ENCODE measurements at regions of chr20 and their contacts with region 1.

Region 1: GRCh38 chr20:8946036-8946940 is 122.6 kb upstream of the PLCB4 start:
- DNase-seq: no peak
- ATAC-seq: no peak
- H3K4me3 ChIP-seq: no peak overlapping the region
- H3K27ac ChIP-seq: no peak overlapping the region
- H3K4me1 ChIP-seq: no peaks in the 10 kb centered on the region
- H3K27me3 ChIP-seq: no peaks in the 10 kb centered on the region
- CTCF ChIP-seq: no peak
- EP300 ChIP-seq: no peak
- POLR2A ChIP-seq: no peak
- RAD21 ChIP-seq: no peak

Region 2: GRCh38 chr20:8853805-8854338 is 92.4 kb before region 1 on chr20:
- CTCF ChIA-PET with region 1: no interaction called
- POLR2A ChIA-PET with region 1: no interaction called
- in situ Hi-C with region 1: no loop called
- intact Hi-C with region 1: loop called (anchors 10 kb)
- DNase-seq: peak; percentile 39 to 61 (median 40)
- ATAC-seq: peak; percentile 88
- H3K4me3 ChIP-seq: no peak overlapping the region
- H3K27ac ChIP-seq: no peak overlapping the region
- H3K4me1 ChIP-seq: no peaks in the 10 kb centered on the region
- H3K27me3 ChIP-seq: no peaks in the 10 kb centered on the region
- CTCF ChIP-seq: peak; percentile 55 to 71 (median 68); a peak in 5 of 6 replicates
- EP300 ChIP-seq: no peak
- POLR2A ChIP-seq: no peak
- RAD21 ChIP-seq: peak; percentile 72 to 75

Region 3: DNA sequence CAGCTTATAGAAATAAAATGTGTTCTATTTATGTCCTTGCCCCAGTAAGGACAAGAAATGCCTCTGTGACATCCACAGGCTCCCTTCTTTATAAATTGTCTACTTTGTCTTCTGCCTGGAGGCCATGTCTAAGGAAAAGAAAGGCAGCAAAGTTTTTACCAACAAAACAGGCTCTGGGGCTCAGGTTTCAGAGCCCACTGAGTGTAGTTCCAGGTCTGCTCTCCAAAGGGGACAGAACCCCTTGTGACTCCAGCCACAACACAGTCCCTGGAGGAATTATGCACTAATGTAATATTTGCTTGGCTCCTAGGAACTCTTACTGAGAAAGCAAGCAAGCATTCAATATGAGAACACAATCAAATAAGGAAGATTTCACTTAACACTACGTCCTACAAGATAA is 812.5 kb after region 1 on chr20:
- CTCF ChIA-PET with region 1: no interaction called
- POLR2A ChIA-PET with region 1: no interaction called
- in situ Hi-C with region 1: no loop called
- intact Hi-C with region 1: no loop called
- DNase-seq: no peak
- ATAC-seq: no peak
- H3K4me3 ChIP-seq: no peak overlapping the region
- H3K27ac ChIP-seq: no peak overlapping the region
- H3K4me1 ChIP-seq: no peaks in the 10 kb centered on the region
- H3K27me3 ChIP-seq: no peaks in the 10 kb centered on the region
- CTCF ChIP-seq: no peak
- EP300 ChIP-seq: no peak
- POLR2A ChIP-seq: no peak
- RAD21 ChIP-seq: no peak

Measured in K562 (cell line).